Ovary (tissue), 10 donors: ENCODE measurements at regions of chr21 and their contacts with region 1.

Region 1: GRCh38 chr21:40102682-40103081 is 235.4 kb downstream of the PCP4 start:
- DNase-seq: no peak
- H3K4me3 ChIP-seq: no peak overlapping the region
- H3K27ac ChIP-seq: no peak overlapping the region
- H3K4me1 ChIP-seq: no peaks in the 10 kb centered on the region
- H3K27me3 ChIP-seq: no peaks in the 10 kb centered on the region
- CTCF ChIP-seq: no peak
- EP300 ChIP-seq: no peak
- POLR2A ChIP-seq: no peak

Region 2: DNA sequence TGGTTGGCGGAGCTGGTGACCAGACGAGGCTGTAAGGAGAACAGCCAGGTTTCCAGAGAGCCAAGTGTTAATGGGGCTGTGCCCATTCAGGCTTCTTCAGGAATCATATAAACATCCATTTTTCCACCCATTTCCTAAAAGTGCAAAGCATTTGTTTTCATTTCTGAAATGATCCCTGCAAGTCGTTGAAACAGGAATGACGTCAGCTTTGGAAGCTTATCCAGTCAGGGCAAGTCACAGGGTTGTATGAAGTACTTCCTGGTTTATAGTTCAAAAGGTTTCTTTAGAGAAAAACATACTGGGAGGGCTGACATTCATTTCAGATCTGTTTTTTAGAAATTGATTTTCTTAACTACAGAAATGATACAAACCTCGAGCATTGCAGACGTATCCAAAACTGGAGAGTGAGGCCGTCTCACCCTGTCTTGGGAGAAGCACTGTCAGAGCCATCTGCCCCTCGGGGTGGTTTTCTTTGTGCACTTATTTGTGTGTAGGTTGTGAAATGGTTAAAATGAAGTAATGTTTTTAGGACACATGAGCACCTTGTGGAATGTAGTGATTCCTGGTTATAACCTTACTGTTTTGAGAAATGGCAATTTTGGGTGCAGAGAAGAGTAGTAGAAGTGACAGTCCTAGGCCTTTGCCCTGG is 328.3 kb before region 1 on chr21:
- intact Hi-C with region 1: no loop called
- DNase-seq: no peak
- H3K4me3 ChIP-seq: no peak overlapping the region
- H3K27ac ChIP-seq: no peak overlapping the region
- H3K4me1 ChIP-seq: no peaks in the 10 kb centered on the region
- H3K27me3 ChIP-seq: no peaks in the 10 kb centered on the region
- CTCF ChIP-seq: no peak
- EP300 ChIP-seq: no peak
- POLR2A ChIP-seq: no peak

Region 3: GRCh38 chr21:39924577-39925308 is 177.9 kb before region 1 on chr21:
- intact Hi-C with region 1: no loop called
- DNase-seq: no peak
- H3K4me3 ChIP-seq: no peak overlapping the region
- H3K27ac ChIP-seq: no peak overlapping the region
- H3K4me1 ChIP-seq: no peaks in the 10 kb centered on the region
- H3K27me3 ChIP-seq: no peaks in the 10 kb centered on the region
- CTCF ChIP-seq: no peak
- EP300 ChIP-seq: no peak
- POLR2A ChIP-seq: no peak

Region 4: DNA sequence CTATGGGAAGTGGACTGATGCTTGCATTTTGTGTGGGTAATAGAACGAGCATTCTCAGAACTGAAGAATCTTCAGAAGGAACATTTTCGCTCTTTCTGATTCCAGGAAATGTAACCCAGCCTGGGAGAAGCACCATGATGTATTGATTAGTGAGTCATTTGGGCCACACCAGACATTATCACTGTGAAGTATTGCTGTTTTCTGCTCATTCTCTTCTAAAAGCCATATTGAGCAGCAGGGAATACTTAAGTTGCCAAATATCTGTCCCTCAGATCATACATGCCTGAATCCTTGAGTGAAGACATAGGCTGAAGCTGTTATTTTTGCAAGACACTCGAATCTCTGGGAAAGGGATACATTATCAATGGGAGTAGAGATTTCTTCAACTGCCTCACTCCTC is 22.3 kb before region 1 on chr21:
- intact Hi-C with region 1: loop called in 1 of 4 experiments (anchors 1 kb)
- DNase-seq: no peak
- H3K4me3 ChIP-seq: no peak overlapping the region
- H3K27ac ChIP-seq: no peak overlapping the region
- H3K4me1 ChIP-seq: no peaks in the 10 kb centered on the region
- H3K27me3 ChIP-seq: no peaks in the 10 kb centered on the region
- CTCF ChIP-seq: no peak
- EP300 ChIP-seq: no peak
- POLR2A ChIP-seq: no peak

Region 5: DNA sequence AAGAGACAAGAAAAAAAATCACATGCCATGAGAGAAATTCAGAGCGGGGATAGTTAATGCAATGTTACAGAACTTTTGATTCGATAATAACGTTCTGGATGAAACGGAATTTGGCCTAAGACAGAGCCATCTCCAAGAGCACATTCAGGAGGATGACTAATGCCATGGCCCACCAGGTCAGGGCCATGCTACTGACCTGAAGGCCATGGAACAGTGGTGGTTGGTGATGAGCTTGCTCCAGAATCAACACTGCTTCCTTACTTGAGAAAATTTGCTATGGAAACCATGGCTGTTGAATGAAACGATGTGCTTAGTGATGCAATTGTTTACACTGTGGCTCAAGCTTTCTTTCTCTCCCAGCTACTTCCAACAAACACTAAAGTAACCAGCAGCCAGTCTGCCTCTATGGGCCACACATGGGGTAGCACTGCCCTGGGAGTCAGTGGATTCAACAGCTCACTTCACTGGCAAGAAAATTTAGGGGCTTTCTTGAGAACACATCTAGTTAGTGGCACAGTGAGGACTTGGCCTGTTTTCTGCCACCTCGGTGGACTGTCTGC is 63.7 kb after region 1 on chr21:
- intact Hi-C with region 1: no loop called
- DNase-seq: no peak
- H3K4me3 ChIP-seq: no peak overlapping the region
- H3K27ac ChIP-seq: no peak overlapping the region
- H3K4me1 ChIP-seq: no peaks in the 10 kb centered on the region
- H3K27me3 ChIP-seq: no peaks in the 10 kb centered on the region
- CTCF ChIP-seq: no peak
- EP300 ChIP-seq: no peak
- POLR2A ChIP-seq: no peak